WTC11 (cell line): ENCODE measurements at regions of chr1 and their contacts with region 1.

Region 1: GRCh38 chr1:53393325-53393792 is 65.5 kb upstream of the LRP8 start:
- DNase-seq: peak; percentile 87
- ATAC-seq: peak; percentile 88
- H3K4me3 Mint-ChIP-seq: no peak overlapping the region
- H3K27ac Mint-ChIP-seq: peak overlapping the region; percentile 55; the same call in 1 of the 2 replicates
- H3K4me1 Mint-ChIP-seq: peaks cover 48% of the 10 kb centered on the region
- H3K27me3 Mint-ChIP-seq: peaks cover 5% of the 10 kb centered on the region; the same call in 1 of the 2 replicates
- CTCF ChIP-seq: peak; percentile 97

Region 2: DNA sequence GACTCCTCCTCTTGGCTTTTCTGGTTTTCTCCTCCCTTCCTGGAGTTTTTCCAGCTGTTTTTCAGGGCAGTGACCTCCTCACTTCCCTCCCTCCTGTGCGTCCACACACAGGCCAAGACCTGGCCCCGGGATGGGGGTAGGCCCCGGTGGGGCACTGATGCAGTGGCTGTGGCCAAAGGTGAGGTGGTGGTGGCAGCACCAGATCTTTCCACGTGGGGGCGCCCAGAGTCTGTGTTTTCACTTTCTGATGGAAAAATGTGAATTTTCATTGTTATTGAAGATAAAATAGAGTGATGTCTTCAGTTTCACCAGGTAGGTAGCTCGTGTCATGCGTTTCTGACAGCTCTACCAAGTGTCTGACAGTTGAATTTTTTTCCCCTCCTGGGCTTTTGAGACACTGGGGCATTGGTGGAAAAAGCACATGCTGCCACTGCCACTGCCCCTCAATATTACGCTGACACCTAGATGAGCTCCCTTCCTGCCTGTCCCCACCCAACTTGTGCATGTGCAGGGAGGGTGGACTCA is 115.1 kb before region 1 on chr1:
- CTCF ChIA-PET with region 1: interaction called, 47 read pairs
- POLR2A ChIA-PET with region 1: no interaction called
- DNase-seq: peak; percentile 76
- ATAC-seq: peak; percentile 82
- H3K4me3 Mint-ChIP-seq: no peak overlapping the region
- H3K27ac Mint-ChIP-seq: peak overlapping the region; percentile 76; the same call in 1 of the 2 replicates
- H3K4me1 Mint-ChIP-seq: no peaks in the 10 kb centered on the region
- H3K27me3 Mint-ChIP-seq: no peaks in the 10 kb centered on the region
- CTCF ChIP-seq: peak; percentile 81

Region 3: DNA sequence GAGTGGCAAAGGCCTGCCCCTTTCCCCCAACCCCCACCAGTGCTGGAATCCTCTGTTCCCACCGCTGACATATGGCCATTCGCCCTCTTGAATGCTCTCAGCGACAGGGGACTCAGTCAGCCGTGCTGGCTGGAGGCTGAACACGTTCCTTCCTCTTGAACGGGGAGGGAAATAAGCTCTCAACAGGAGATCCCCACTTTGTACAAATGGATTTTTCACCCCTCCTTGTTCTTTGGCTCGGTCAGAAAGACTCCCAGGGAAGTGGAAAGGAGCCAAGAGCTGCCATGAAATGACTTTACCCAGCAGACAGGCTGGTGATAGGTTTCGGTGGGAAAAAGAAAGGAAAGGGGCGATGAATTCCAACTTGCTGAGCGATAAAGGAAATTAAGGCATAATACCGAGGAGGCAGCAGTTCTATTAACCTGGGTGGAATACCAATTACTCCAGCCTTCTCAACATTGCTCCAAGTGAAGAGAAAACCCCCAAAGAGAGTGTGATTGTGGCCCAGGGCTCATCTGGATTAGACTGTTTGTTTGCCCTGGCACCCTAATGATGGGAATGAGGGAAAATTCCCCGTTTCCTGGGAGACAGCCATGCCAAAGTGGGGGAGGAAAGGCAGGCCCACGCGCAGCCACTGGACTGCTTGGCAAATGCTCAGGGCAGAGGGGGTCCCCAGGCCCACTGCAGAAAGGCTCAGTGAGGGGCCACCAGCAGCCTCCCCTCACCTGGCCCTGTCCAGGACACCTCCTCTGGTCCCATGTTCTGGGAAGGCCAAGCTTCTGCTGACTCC is 89.4 kb before region 1 on chr1:
- CTCF ChIA-PET with region 1: interaction called, 19 read pairs
- POLR2A ChIA-PET with region 1: no interaction called
- DNase-seq: no peak
- ATAC-seq: no peak
- H3K4me3 Mint-ChIP-seq: no peak overlapping the region
- H3K27ac Mint-ChIP-seq: peak overlapping the region; percentile 67
- H3K4me1 Mint-ChIP-seq: peaks cover 19% of the 10 kb centered on the region
- H3K27me3 Mint-ChIP-seq: no peaks in the 10 kb centered on the region
- CTCF ChIP-seq: no peak

Region 4: DNA sequence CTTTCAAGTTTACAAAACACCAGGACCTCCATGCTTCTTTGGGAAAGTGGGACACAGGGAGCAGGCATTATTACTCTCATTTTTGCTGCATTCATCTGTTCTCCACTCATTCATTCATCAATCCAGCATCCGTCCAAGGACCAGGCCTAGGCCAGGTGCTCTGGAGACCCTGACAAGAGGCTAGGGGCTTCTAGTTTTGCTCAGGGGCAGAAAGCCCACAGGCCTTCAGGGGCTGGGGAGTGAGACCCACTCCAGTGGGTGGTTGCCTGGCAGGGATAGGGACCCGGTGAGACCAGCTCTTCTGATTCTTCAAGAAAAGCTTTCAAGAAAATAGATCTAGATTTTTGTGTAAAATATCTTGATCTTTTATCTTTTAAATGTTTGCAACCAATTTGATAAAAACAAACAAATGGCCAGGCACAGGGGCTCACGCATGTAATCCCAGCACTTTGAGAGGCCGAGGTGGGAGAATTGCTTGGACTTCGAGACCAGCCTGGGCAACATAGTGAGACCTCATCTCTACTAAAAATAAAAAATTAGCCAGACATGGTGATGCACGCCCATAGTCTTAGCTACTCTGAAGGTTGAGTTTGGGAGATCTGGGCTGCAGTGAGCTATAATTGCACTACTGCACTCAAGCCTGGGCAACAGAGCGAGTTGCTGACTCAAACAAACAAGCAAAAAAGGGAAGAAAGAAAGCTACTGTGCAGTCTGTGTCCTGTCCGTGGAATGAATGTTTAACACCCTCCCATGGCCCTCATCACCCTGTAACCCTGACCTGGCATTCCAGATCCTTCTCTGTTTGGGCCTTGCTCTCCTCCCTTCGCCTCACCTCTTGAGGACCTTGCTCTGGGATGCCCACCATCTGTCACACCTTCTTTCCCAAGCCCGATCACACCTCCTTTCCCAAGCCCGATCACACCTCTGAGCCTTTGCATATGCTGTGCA is 48.2 kb before region 1 on chr1:
- CTCF ChIA-PET with region 1: interaction called, 10 read pairs
- POLR2A ChIA-PET with region 1: no interaction called
- DNase-seq: no peak
- ATAC-seq: no peak
- H3K4me3 Mint-ChIP-seq: no peak overlapping the region
- H3K27ac Mint-ChIP-seq: no peak overlapping the region
- H3K4me1 Mint-ChIP-seq: peaks cover 3% of the 10 kb centered on the region
- H3K27me3 Mint-ChIP-seq: peaks cover 28% of the 10 kb centered on the region
- CTCF ChIP-seq: no peak

Region 5: GRCh38 chr1:53376041-53376461 is 17.3 kb before region 1 on chr1:
- CTCF ChIA-PET with region 1: interaction called, 19 read pairs
- POLR2A ChIA-PET with region 1: no interaction called
- DNase-seq: peak; percentile 14
- ATAC-seq: peak; percentile 26
- H3K4me3 Mint-ChIP-seq: no peak overlapping the region
- H3K27ac Mint-ChIP-seq: no peak overlapping the region
- H3K4me1 Mint-ChIP-seq: peaks cover 24% of the 10 kb centered on the region
- H3K27me3 Mint-ChIP-seq: peaks cover 5% of the 10 kb centered on the region
- CTCF ChIP-seq: no peak